SK-N-SH (cell line): ENCODE measurements at regions of chr2 and their contacts with region 1.

Region 1: GRCh38 chr2:38581193-38582147 is 21.3 kb downstream of the HNRNPLL start:
- DNase-seq: peak; percentile 44
- H3K4me3 ChIP-seq: no peak overlapping the region
- H3K27ac ChIP-seq: peak overlapping the region in 1 of 2 experiments; percentile 3; a peak in 1 of 4 replicates
- H3K4me1 ChIP-seq: peaks cover 0 to 13% of the 10 kb centered on the region in 2 experiments; a peak in 2 of 4 replicates
- H3K27me3 ChIP-seq: no peaks in the 10 kb centered on the region
- CTCF ChIP-seq: peak; percentile 89
- EP300 ChIP-seq: no peak
- RAD21 ChIP-seq: peak; percentile 89

Region 2: GRCh38 chr2:38417745-38418689 is 163.5 kb before region 1 on chr2:
- CTCF ChIA-PET with region 1: no interaction called
- POLR2A ChIA-PET with region 1: no interaction called
- DNase-seq: no peak
- H3K4me3 ChIP-seq: no peak overlapping the region
- H3K27ac ChIP-seq: no peak overlapping the region
- H3K4me1 ChIP-seq: peaks cover 0 to 5% of the 10 kb centered on the region in 2 experiments; a peak in 1 of 4 replicates
- H3K27me3 ChIP-seq: peaks cover 9% of the 10 kb centered on the region; the same call in 1 of the 2 replicates
- CTCF ChIP-seq: no peak
- EP300 ChIP-seq: no peak
- RAD21 ChIP-seq: no peak

Region 3: GRCh38 chr2:38554973-38555595 is 26.4 kb before region 1 on chr2:
- CTCF ChIA-PET with region 1: interaction called, 20 read pairs
- POLR2A ChIA-PET with region 1: no interaction called
- DNase-seq: no peak
- H3K4me3 ChIP-seq: no peak overlapping the region
- H3K27ac ChIP-seq: no peak overlapping the region
- H3K4me1 ChIP-seq: peaks cover 0 to 2% of the 10 kb centered on the region in 2 experiments; a peak in 1 of 4 replicates
- H3K27me3 ChIP-seq: no peaks in the 10 kb centered on the region
- CTCF ChIP-seq: peak; percentile 57
- EP300 ChIP-seq: no peak
- RAD21 ChIP-seq: no peak

Region 4: GRCh38 chr2:38602732-38603401 is 21.4 kb after region 1 on chr2 and contains the start of gene HNRNPLL:
- CTCF ChIA-PET with region 1: interaction called, 308 read pairs
- POLR2A ChIA-PET with region 1: interaction called, 9 read pairs
- DNase-seq: peak; percentile 100
- H3K4me3 ChIP-seq: peak within 1 kb of the TSS; percentile 90 to 94
- H3K27ac ChIP-seq: peak within 1 kb of the TSS; percentile 92 to 96
- H3K4me1 ChIP-seq: peaks cover 9 to 19% of the 10 kb centered on the region in 2 experiments
- H3K27me3 ChIP-seq: no peaks in the 10 kb centered on the region
- CTCF ChIP-seq: peak; percentile 19
- EP300 ChIP-seq: peak; percentile 6 to 31; a peak in 1 of 4 replicates
- RAD21 ChIP-seq: no peak
- polyA plus RNA-seq, gene HNRNPLL: 24.4 and 29.8 TPM in 2 replicates

Region 5: DNA sequence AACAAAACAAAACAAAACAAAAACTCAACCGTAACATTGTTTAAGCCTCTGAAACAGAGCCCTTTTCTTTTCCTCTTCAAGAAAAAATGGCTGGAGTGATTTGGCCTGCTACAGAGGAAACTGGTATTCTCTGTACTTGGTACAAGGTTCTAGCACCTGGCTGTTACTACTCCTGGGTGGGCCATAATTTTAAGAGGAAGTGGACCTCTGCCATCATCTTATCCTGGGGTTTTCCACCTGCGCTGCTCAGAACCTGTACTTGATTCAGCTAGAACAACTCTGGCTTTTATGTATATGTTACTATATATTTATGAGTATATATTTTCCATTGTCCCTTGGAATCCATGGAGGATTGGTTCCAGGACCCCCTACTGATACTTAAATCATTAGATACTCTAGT is 147.2 kb after region 1 on chr2:
- CTCF ChIA-PET with region 1: interaction called, 25 read pairs
- POLR2A ChIA-PET with region 1: no interaction called
- DNase-seq: no peak
- H3K4me3 ChIP-seq: no peak overlapping the region
- H3K27ac ChIP-seq: no peak overlapping the region
- H3K4me1 ChIP-seq: no peaks in the 10 kb centered on the region
- H3K27me3 ChIP-seq: no peaks in the 10 kb centered on the region
- CTCF ChIP-seq: no peak
- EP300 ChIP-seq: no peak
- RAD21 ChIP-seq: no peak

Region 6: GRCh38 chr2:38740851-38741731 is 159.6 kb after region 1 on chr2:
- CTCF ChIA-PET with region 1: interaction called, 39 read pairs
- POLR2A ChIA-PET with region 1: no interaction called
- DNase-seq: peak; percentile 50
- H3K4me3 ChIP-seq: no peak overlapping the region
- H3K27ac ChIP-seq: peak overlapping the region in 1 of 2 experiments; percentile 23; a peak in 2 of 4 replicates
- H3K4me1 ChIP-seq: peaks cover 2 to 19% of the 10 kb centered on the region in 2 experiments
- H3K27me3 ChIP-seq: no peaks in the 10 kb centered on the region
- CTCF ChIP-seq: peak; percentile 75
- EP300 ChIP-seq: no peak
- RAD21 ChIP-seq: peak; percentile 56

Region 7: GRCh38 chr2:39124000-39124745 is 542.7 kb after region 1 on chr2:
- CTCF ChIA-PET with region 1: no interaction called
- POLR2A ChIA-PET with region 1: no interaction called
- DNase-seq: peak; percentile 95
- H3K4me3 ChIP-seq: peak overlapping the region; percentile 87 to 89
- H3K27ac ChIP-seq: peak overlapping the region; percentile 70 to 97
- H3K4me1 ChIP-seq: peaks cover 6 to 34% of the 10 kb centered on the region in 2 experiments; a peak in 3 of 4 replicates
- H3K27me3 ChIP-seq: no peaks in the 10 kb centered on the region
- CTCF ChIP-seq: peak; percentile 68
- EP300 ChIP-seq: peak in 1 of 2 experiments; percentile 48; a peak in 1 of 4 replicates
- RAD21 ChIP-seq: peak; percentile 41; the same call in 1 of the 2 replicates